ENCODE measurements at regions of chr22 and their contacts with region 1.

Region 1: DNA sequence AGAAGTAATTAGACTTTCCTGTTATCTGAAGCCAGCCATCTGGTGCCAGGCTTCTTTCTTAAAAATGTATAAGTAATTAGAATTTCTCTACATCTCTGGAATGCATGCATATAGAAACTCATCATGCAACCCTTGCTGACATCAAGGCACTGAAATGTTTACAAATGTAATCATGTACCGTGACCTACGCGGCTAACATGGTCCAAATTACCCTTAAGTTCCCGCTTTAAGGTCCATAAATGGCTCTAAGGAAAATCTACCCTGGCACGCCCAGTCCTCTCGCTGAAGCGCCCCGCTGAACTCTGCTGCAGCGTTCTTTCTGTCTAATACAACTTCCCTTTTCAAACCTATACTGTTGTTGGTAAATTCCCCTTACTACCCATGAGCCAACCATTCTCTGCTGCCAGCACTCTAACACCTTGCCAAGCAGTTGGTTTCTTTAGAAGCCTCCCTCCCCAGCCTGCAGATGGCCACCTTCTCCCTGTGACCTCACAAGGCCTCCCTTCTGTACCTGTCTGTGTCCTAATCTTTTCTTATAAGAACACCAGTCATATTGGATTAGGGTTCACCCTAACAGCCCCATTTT is 13.5 kb upstream of the HMOX1 start:
- DNase-seq: peak; percentile 65
- ATAC-seq: peak; percentile 90
- H3K4me3 ChIP-seq: no peak overlapping the region
- H3K27ac ChIP-seq: no peak overlapping the region
- H3K4me1 ChIP-seq: peaks cover 19% of the 10 kb centered on the region
- H3K27me3 ChIP-seq: no peaks in the 10 kb centered on the region
- CTCF ChIP-seq: peak in 2 of 3 experiments; percentile 7 to 42; a peak in 2 of 6 replicates
- EP300 ChIP-seq: no peak
- POLR2A ChIP-seq: no peak
- RAD21 ChIP-seq: no peak

Region 2: DNA sequence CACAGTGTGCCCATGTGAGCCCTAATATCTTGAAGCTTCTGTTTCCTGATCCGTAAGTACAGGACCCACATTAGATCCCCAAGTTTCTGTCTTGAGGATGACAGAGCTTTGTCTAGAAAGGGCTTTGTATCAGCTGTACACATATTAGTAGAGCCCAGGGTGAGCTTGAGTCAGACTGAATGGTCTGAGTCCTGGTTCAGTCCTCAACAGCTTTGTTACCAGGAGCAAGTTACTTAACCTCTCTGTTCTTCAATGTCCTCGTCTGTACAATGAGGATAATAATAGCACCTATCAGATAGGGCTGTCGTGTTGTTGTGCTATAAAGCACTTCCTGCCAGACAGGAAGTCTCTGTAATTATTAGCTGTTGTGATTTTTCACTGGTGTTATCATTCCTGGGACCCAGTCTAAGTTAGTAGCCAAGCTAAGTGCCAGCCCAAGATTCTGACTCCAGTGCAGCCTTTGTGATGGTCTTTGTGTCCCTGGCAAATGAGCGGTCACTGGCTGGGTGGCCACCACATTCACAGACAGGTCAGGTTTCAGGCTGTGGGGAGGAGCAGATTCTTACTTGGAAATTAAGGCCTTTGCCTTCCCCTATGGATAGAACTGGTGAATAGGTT is 60.9 kb before region 1 on chr22:
- CTCF ChIA-PET with region 1: no interaction called
- POLR2A ChIA-PET with region 1: interaction called, 10 read pairs
- RAD21 ChIA-PET with region 1: interaction called, 3 read pairs
- SMC1A ChIA-PET with region 1: no interaction called
- in situ Hi-C with region 1: no loop called
- intact Hi-C with region 1: no loop called
- DNase-seq: no peak
- ATAC-seq: 0 out of 3 replicates have a peak, but pooled peaks have one; percentile 1
- H3K4me3 ChIP-seq: no peak overlapping the region
- H3K27ac ChIP-seq: peak overlapping the region; percentile 7; the same call in 1 of the 2 replicates
- H3K4me1 ChIP-seq: peaks cover 46% of the 10 kb centered on the region
- H3K27me3 ChIP-seq: no peaks in the 10 kb centered on the region
- CTCF ChIP-seq: no peak
- EP300 ChIP-seq: no peak
- POLR2A ChIP-seq: no peak
- RAD21 ChIP-seq: no peak

Region 3: DNA sequence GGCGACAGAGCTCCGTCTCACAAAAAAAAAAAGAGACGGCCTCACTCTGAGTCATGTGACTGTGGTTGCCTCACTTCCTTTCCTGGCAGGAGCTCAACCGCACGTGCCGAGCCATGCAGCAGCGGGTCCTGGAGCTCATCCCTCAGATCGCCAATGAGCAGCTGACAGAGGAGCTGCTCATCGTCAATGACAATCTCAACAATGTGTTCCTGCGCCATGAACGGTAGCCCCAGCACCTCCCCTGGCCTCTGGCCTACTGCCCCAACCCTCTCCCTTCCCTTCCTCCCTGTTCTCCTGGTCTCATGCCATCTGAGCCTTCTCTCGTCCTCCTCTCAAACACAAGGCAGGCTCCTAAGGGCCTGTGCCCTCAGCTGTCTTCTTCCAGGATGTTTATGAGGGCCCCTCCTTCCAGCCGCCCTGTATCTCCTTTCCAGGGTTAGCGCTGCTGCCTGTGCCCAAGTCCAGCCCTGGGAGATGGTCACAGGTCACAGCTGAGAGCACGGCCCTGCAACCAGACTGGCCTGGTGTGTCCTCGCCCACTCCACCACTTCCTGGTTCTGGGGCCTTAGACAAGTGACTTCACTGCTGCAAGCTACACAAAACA is 37.0 kb before region 1 on chr22:
- CTCF ChIA-PET with region 1: no interaction called
- POLR2A ChIA-PET with region 1: no interaction called
- RAD21 ChIA-PET with region 1: no interaction called
- SMC1A ChIA-PET with region 1: no interaction called
- in situ Hi-C with region 1: no loop called
- intact Hi-C with region 1: no loop called
- DNase-seq: no peak
- ATAC-seq: peak; percentile 38; the same call in 1 of the 3 replicates
- H3K4me3 ChIP-seq: no peak overlapping the region
- H3K27ac ChIP-seq: no peak overlapping the region
- H3K4me1 ChIP-seq: peaks cover 9% of the 10 kb centered on the region
- H3K27me3 ChIP-seq: no peaks in the 10 kb centered on the region
- CTCF ChIP-seq: no peak
- EP300 ChIP-seq: no peak
- POLR2A ChIP-seq: no peak
- RAD21 ChIP-seq: no peak